B cell (primary cell): ENCODE measurements at regions of chr5 and their contacts with region 1.

Region 1: GRCh38 chr5:159100025-159100781 is 487 bp upstream of the EBF1 start:
- DNase-seq: peak; percentile 96
- ATAC-seq: peak; percentile 70
- H3K4me3 ChIP-seq: peak overlapping the region; percentile 86 to 99 (median 90)
- H3K4me3 Mint-ChIP-seq: peak overlapping the region; percentile 100
- H3K27ac ChIP-seq: peak overlapping the region; percentile 79 to 92
- H3K27ac Mint-ChIP-seq: peak overlapping the region; percentile 96
- H3K4me1 ChIP-seq: peaks cover 62% of the 10 kb centered on the region in 2 donors
- H3K4me1 Mint-ChIP-seq: peaks cover 66% of the 10 kb centered on the region
- H3K27me3 ChIP-seq: no peaks in the 10 kb centered on the region
- H3K27me3 Mint-ChIP-seq: no peaks in the 10 kb centered on the region
- CTCF ChIP-seq: no peak

Region 2: DNA sequence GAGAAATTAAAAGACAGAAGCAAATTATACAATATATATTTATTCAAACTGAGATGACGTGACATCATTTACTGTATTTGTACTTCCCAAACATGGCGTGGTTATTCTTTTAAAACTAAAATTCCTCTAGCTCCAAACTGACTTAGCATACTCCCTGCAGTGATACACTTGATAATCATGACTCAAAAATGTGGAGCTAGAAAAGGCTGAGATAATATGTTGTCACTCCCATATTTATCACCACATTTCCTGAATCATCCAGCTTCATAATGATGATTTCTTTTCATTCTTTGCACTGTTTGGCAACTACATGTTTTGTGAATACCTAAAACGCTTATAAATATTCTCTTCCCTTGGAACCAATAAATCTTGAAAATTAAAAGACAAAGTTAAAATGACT is 341.5 kb before region 1 on chr5:
- CTCF ChIA-PET with region 1: no interaction called
- POLR2A ChIA-PET with region 1: no interaction called
- intact Hi-C with region 1: loop called (anchors 5 kb)
- DNase-seq: no peak
- ATAC-seq: no peak
- H3K4me3 ChIP-seq: no peak overlapping the region
- H3K4me3 Mint-ChIP-seq: no peak overlapping the region
- H3K27ac ChIP-seq: no peak overlapping the region
- H3K27ac Mint-ChIP-seq: no peak overlapping the region
- H3K4me1 ChIP-seq: peaks cover 27 to 32% of the 10 kb centered on the region in 2 donors
- H3K4me1 Mint-ChIP-seq: peaks cover 56% of the 10 kb centered on the region
- H3K27me3 ChIP-seq: no peaks in the 10 kb centered on the region
- H3K27me3 Mint-ChIP-seq: no peaks in the 10 kb centered on the region
- CTCF ChIP-seq: no peak

Region 3: DNA sequence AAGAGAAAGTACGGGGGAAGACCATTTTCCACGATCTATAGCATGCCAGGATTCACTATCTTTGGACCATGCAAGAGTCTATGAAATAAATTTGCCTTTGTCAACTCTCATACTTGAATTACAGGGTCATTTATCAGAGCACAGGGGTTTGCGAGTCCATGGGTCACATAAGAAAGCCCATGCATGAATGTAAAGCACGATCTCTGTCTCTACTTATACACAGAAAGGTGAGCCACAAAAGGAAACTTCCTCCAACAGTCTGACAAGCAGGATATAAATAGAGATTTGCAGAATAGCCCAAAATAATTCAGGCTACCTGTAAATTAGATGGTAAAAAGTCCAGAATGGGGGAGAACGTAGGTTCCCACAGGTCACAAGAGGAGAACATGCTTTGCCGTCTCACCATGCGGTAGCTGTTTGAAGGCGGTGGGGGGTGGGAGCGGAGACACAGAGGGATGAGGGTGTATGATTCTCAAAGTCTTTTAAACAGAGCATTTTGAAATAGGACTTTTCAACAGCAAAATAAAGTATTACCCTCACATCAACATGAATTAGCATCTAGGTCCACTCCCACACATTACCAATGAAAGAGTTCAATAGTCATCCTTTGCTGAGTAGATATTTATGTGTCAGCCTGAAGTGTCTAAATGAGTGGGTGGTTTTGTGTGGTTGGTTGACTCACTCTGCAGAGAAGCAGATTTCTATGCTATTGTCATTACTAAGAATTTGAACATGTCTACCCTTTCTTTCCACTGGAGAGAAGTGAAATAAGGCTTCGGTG is 280.2 kb before region 1 on chr5:
- CTCF ChIA-PET with region 1: no interaction called
- POLR2A ChIA-PET with region 1: no interaction called
- intact Hi-C with region 1: loop called (anchors 2 kb)
- DNase-seq: peak; percentile 55
- ATAC-seq: peak; percentile 56
- H3K4me3 ChIP-seq: peak overlapping the region; percentile 2 to 50 (median 19)
- H3K4me3 Mint-ChIP-seq: peak overlapping the region; percentile 82
- H3K27ac ChIP-seq: peak overlapping the region; percentile 82 to 87
- H3K27ac Mint-ChIP-seq: peak overlapping the region; percentile 80
- H3K4me1 ChIP-seq: peaks cover 98 to 99% of the 10 kb centered on the region in 2 donors
- H3K4me1 Mint-ChIP-seq: peaks cover 97% of the 10 kb centered on the region
- H3K27me3 ChIP-seq: no peaks in the 10 kb centered on the region
- H3K27me3 Mint-ChIP-seq: no peaks in the 10 kb centered on the region
- CTCF ChIP-seq: no peak

Region 4: GRCh38 chr5:159049844-159050315 is 50.3 kb before region 1 on chr5:
- CTCF ChIA-PET with region 1: interaction called, 7 read pairs
- POLR2A ChIA-PET with region 1: no interaction called
- intact Hi-C with region 1: loop called (anchors 1 kb)
- DNase-seq: peak; percentile 57
- ATAC-seq: no peak
- H3K4me3 ChIP-seq: peak overlapping the region in 3 of 5 experiments; percentile 16 to 28 (median 17)
- H3K4me3 Mint-ChIP-seq: peak overlapping the region; percentile 91
- H3K27ac ChIP-seq: peak overlapping the region; percentile 74 to 80
- H3K27ac Mint-ChIP-seq: peak overlapping the region; percentile 92
- H3K4me1 ChIP-seq: peaks cover 65 to 68% of the 10 kb centered on the region in 2 donors
- H3K4me1 Mint-ChIP-seq: peaks cover 95% of the 10 kb centered on the region
- H3K27me3 ChIP-seq: no peaks in the 10 kb centered on the region
- H3K27me3 Mint-ChIP-seq: no peaks in the 10 kb centered on the region
- CTCF ChIP-seq: peak; percentile 61

Region 5: GRCh38 chr5:159073026-159073425 is 27.2 kb before region 1 on chr5:
- CTCF ChIA-PET with region 1: no interaction called
- POLR2A ChIA-PET with region 1: no interaction called
- intact Hi-C with region 1: no loop called
- DNase-seq: no peak
- ATAC-seq: no peak
- H3K4me3 ChIP-seq: no peak overlapping the region
- H3K4me3 Mint-ChIP-seq: no peak overlapping the region
- H3K27ac ChIP-seq: no peak overlapping the region
- H3K27ac Mint-ChIP-seq: peak overlapping the region; percentile 44
- H3K4me1 ChIP-seq: no peaks in the 10 kb centered on the region
- H3K4me1 Mint-ChIP-seq: peaks cover 47% of the 10 kb centered on the region
- H3K27me3 ChIP-seq: no peaks in the 10 kb centered on the region
- H3K27me3 Mint-ChIP-seq: no peaks in the 10 kb centered on the region
- CTCF ChIP-seq: no peak

Region 6: GRCh38 chr5:160008877-160009590 is 908.8 kb after region 1 on chr5 and contains the start of gene TTC1:
- CTCF ChIA-PET with region 1: no interaction called
- POLR2A ChIA-PET with region 1: interaction called, 12 read pairs
- intact Hi-C with region 1: no loop called
- DNase-seq: peak; percentile 98
- ATAC-seq: peak; percentile 97
- H3K4me3 ChIP-seq: peak within 1 kb of the TSS; percentile 85 to 100 (median 98)
- H3K4me3 Mint-ChIP-seq: peak within 1 kb of the TSS; percentile 87
- H3K27ac ChIP-seq: peak within 1 kb of the TSS; percentile 77 to 96
- H3K27ac Mint-ChIP-seq: peak within 1 kb of the TSS; percentile 83
- H3K4me1 ChIP-seq: peaks cover 18 to 19% of the 10 kb centered on the region in 2 donors
- H3K4me1 Mint-ChIP-seq: peaks cover 25% of the 10 kb centered on the region
- H3K27me3 ChIP-seq: no peaks in the 10 kb centered on the region
- H3K27me3 Mint-ChIP-seq: no peaks in the 10 kb centered on the region
- CTCF ChIP-seq: no peak
- total RNA-seq, gene TTC1: 37.5 and 40.4 TPM in 2 replicates